Activated CD4-positive, alpha-beta T cell treated with anti-CD3 and anti-CD28 coated beads for 36 hours (primary cell): ENCODE measurements at regions of chr18 and their contacts with region 1.

Region 1: GRCh38 chr18:31876707-31877106 is 66.2 kb downstream of the TRAPPC8 start:
- DNase-seq: no peak
- ATAC-seq: no peak
- H3K4me3 Mint-ChIP-seq: no peak overlapping the region
- H3K27ac Mint-ChIP-seq: no peak overlapping the region
- H3K4me1 Mint-ChIP-seq: peaks cover 14% of the 10 kb centered on the region
- H3K27me3 Mint-ChIP-seq: no peaks in the 10 kb centered on the region

Region 2: DNA sequence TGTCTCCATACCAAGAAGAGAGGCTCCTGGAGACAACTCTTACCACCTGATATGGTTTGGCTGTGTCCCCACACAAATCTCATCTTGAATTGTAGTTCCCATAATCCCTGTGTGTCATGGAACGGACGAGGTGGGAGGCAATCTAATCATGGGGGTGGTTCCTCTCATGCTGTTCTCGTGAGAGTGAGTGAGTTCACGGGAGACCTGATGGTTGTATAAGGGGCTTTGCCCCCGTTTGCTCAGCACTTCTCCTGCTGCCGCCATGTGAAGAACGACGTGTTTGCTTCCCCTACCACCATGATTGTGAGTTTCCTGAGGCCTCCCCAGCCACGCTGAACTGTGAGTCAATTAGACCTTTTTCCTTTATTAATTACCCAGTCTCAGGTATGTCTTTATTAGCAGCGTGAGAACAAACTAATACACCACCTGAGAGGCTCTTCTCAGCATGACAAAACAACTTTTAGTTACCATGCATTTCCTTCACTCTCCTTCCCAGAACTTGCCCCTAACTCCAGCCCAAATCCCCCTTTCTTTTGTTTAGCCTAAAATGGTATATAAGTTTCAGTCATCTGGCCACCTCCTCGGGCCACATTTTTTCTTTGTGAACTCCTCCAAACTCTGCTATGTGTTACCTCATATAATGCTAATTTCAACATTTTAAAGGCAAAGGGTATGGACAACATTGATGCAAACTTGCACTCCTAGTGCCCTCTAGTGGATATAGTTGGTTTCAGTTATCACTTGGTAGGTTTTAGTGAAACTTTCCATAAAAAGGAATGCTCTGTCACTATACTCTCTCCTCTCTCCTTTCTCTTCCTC is 57.4 kb before region 1 on chr18:
- CTCF ChIA-PET with region 1: no interaction called
- POLR2A ChIA-PET with region 1: no interaction called
- intact Hi-C with region 1: no loop called
- DNase-seq: no peak
- ATAC-seq: peak; percentile 63
- H3K4me3 Mint-ChIP-seq: no peak overlapping the region
- H3K27ac Mint-ChIP-seq: no peak overlapping the region
- H3K4me1 Mint-ChIP-seq: no peaks in the 10 kb centered on the region
- H3K27me3 Mint-ChIP-seq: peaks cover 2% of the 10 kb centered on the region

Region 3: DNA sequence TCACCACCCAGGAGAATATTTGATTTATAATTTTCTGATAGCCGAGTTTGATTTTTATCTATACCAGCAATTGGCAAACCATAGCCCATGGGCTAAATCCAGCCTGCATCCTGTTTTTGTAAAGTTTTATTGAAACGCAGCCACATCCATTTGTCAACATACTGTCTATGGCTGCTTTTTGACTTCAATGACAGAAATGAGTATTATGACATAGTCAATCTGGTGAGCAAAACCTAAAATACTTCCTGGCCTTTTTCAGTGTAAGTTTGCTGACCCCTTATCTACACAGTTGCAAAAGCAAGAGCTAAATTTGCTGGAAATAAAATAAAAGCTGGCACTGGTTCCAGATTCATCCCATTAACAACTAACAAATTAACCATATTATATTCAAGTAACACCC is 36.2 kb before region 1 on chr18:
- CTCF ChIA-PET with region 1: no interaction called
- POLR2A ChIA-PET with region 1: no interaction called
- intact Hi-C with region 1: loop called in 1 of 2 experiments (anchors 5 kb)
- DNase-seq: no peak
- ATAC-seq: no peak
- H3K4me3 Mint-ChIP-seq: no peak overlapping the region
- H3K27ac Mint-ChIP-seq: no peak overlapping the region
- H3K4me1 Mint-ChIP-seq: no peaks in the 10 kb centered on the region
- H3K27me3 Mint-ChIP-seq: no peaks in the 10 kb centered on the region

Region 4: GRCh38 chr18:32511147-32511546 is 634.4 kb after region 1 on chr18:
- CTCF ChIA-PET with region 1: no interaction called
- POLR2A ChIA-PET with region 1: no interaction called
- intact Hi-C with region 1: loop called in 1 of 2 experiments (anchors 5 kb)
- DNase-seq: no peak
- ATAC-seq: peak; percentile 79
- H3K4me3 Mint-ChIP-seq: no peak overlapping the region
- H3K27ac Mint-ChIP-seq: no peak overlapping the region
- H3K4me1 Mint-ChIP-seq: peaks cover 13% of the 10 kb centered on the region
- H3K27me3 Mint-ChIP-seq: peaks cover 15% of the 10 kb centered on the region